Heart left ventricle (tissue), 16 donors: ENCODE measurements at regions of chr12 and their contacts with region 1.

Region 1: GRCh38 chr12:57487597-57488401 is at the start of gene MARS1:
- DNase-seq: peak; percentile 94 to 96 (median 95)
- ATAC-seq: peak; percentile 98 to 99 (median 98)
- H3K4me3 ChIP-seq: peak within 1 kb of the TSS; percentile 66 to 97 (median 82)
- H3K27ac ChIP-seq: peak within 1 kb of the TSS in 11 of 12 donors; percentile 53 to 84 (median 72)
- H3K4me1 ChIP-seq: peaks cover 6 to 20% (median 10%) of the 10 kb centered on the region in 12 donors
- H3K27me3 ChIP-seq: no peaks in the 10 kb centered on the region
- CTCF ChIP-seq: peak in 1 of 12 donors; percentile 17
- POLR2A ChIP-seq: peak in 1 of 2 donors; percentile 62
- total RNA-seq, gene MARS1: 36.8 to 109 (median 69.7) TPM

Region 2: GRCh38 chr12:57441846-57442427 is 45.9 kb before region 1 on chr12:
- intact Hi-C with region 1: no loop called
- DNase-seq: no peak
- ATAC-seq: no peak
- H3K4me3 ChIP-seq: no peak overlapping the region
- H3K27ac ChIP-seq: no peak overlapping the region
- H3K4me1 ChIP-seq: no peaks in the 10 kb centered on the region
- H3K27me3 ChIP-seq: no peaks in the 10 kb centered on the region
- CTCF ChIP-seq: no peak
- POLR2A ChIP-seq: no peak

Region 3: DNA sequence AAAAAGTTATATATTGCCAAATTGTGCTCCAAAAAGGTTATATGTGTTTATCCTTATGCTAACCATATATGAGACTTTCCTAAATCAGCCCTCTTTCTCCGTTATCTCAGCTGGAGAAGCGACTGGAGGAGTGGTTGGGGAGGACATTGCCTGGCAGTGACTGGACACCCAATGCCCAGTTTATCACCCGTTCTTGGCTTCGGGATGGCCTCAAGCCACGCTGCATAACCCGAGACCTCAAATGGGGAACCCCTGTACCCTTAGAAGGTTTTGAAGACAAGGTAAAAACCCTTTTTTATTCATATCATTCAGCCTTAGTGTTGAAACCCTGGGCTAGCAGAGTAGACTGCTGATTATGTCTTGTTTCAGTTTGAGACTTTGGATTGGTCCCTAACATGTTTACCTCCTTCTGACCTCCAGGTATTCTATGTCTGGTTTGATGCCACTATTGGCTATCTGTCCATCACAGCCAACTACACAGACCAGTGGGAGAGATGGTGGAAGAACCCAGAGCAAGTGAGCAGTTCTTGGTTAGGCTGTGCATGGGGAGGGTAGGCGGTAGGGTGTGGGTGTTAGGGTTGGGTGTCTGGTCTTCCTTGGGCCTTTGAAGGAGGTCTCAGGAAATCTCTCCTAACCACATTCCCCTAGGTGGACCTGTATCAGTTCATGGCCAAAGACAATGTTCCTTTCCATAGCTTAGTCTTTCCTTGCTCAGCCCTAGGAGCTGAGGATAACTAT is 24.0 kb after region 1 on chr12:
- intact Hi-C with region 1: loop called in 1 of 10 experiments (anchors 2 kb)
- DNase-seq: no peak
- ATAC-seq: peak in 1 of 4 donors; percentile 29
- H3K4me3 ChIP-seq: no peak overlapping the region
- H3K27ac ChIP-seq: no peak overlapping the region
- H3K4me1 ChIP-seq: peaks cover 0 to 24% (median 1%) of the 10 kb centered on the region in 12 donors
- H3K27me3 ChIP-seq: no peaks in the 10 kb centered on the region
- CTCF ChIP-seq: no peak
- POLR2A ChIP-seq: no peak

Region 4: GRCh38 chr12:57546438-57547383 is 58.9 kb after region 1 on chr12 and contains the start of gene DCTN2:
- intact Hi-C with region 1: loop called in 2 of 10 experiments (anchors 2 to 5 kb)
- DNase-seq: peak; percentile 95 to 98 (median 97)
- ATAC-seq: peak; percentile 98 to 100 (median 99)
- H3K4me3 ChIP-seq: peak within 1 kb of the TSS; percentile 60 to 99 (median 93)
- H3K27ac ChIP-seq: peak within 1 kb of the TSS; percentile 63 to 93 (median 86)
- H3K4me1 ChIP-seq: peaks cover 0 to 48% (median 30%) of the 10 kb centered on the region in 12 donors
- H3K27me3 ChIP-seq: peaks cover 0 to 32% (median 22%) of the 10 kb centered on the region in 9 donors
- CTCF ChIP-seq: peak in 5 of 12 donors; percentile 4 to 10 (median 5)
- POLR2A ChIP-seq: peak in 1 of 2 donors; percentile 55
- total RNA-seq, gene DCTN2: 84.4 to 159 (median 109) TPM

Region 5: GRCh38 chr12:57852620-57853500 is 365.1 kb after region 1 on chr12:
- intact Hi-C with region 1: no loop called
- DNase-seq: peak; percentile 69 to 79 (median 78)
- ATAC-seq: peak; percentile 72 to 88 (median 82)
- H3K4me3 ChIP-seq: peak overlapping the region in 11 of 12 donors; percentile 19 to 62 (median 51)
- H3K27ac ChIP-seq: peak overlapping the region; percentile 51 to 96 (median 85)
- H3K4me1 ChIP-seq: peaks cover 0 to 49% (median 34%) of the 10 kb centered on the region in 12 donors
- H3K27me3 ChIP-seq: peaks cover 0 to 10% (median 0%) of the 10 kb centered on the region in 9 donors
- CTCF ChIP-seq: peak in 9 of 12 donors; percentile 7 to 31 (median 25)
- POLR2A ChIP-seq: no peak